ENCODE measurements at regions of chr16 and their contacts with region 1.

Region 1: GRCh38 chr16:82630688-82631087 is 3.9 kb downstream of the CDH13 start:
- DNase-seq: no peak
- H3K4me3 Mint-ChIP-seq: no peak overlapping the region
- H3K27ac Mint-ChIP-seq: no peak overlapping the region
- H3K4me1 Mint-ChIP-seq: peaks cover 6% of the 10 kb centered on the region
- H3K27me3 Mint-ChIP-seq: peaks cover 41% of the 10 kb centered on the region

Region 2: DNA sequence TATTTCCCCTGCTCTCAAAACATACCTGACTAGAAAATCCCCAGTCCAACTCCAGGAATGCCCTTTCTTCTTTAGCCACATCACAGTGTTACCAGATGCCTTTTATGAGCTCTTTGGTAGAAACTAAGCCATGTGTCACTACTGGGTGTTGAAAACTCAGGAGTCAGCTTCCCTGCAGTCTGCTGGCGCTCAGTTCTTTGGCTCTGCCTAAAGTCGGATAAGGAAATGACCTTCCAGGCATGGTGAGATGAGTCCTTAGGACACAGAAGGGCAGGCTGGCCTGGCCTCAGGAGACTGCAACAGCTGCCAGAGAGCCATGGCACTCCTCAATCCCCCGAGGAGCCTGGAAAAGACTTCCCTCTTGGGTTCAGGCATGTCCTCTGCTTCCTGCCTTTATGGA is 85.1 kb after region 1 on chr16:
- CTCF ChIA-PET with region 1: no interaction called
- intact Hi-C with region 1: loop called (anchors 5 kb)
- DNase-seq: no peak
- H3K4me3 Mint-ChIP-seq: no peak overlapping the region
- H3K27ac Mint-ChIP-seq: no peak overlapping the region
- H3K4me1 Mint-ChIP-seq: no peaks in the 10 kb centered on the region
- H3K27me3 Mint-ChIP-seq: no peaks in the 10 kb centered on the region

Region 3: GRCh38 chr16:83215406-83216001 is 584.8 kb after region 1 on chr16:
- CTCF ChIA-PET with region 1: no interaction called
- intact Hi-C with region 1: loop called (anchors 5 kb)
- DNase-seq: peak; percentile 62
- H3K4me3 Mint-ChIP-seq: no peak overlapping the region
- H3K27ac Mint-ChIP-seq: no peak overlapping the region
- H3K4me1 Mint-ChIP-seq: no peaks in the 10 kb centered on the region
- H3K27me3 Mint-ChIP-seq: no peaks in the 10 kb centered on the region